ENCODE measurements at regions of chr14 and their contacts with region 1.

Region 1: DNA sequence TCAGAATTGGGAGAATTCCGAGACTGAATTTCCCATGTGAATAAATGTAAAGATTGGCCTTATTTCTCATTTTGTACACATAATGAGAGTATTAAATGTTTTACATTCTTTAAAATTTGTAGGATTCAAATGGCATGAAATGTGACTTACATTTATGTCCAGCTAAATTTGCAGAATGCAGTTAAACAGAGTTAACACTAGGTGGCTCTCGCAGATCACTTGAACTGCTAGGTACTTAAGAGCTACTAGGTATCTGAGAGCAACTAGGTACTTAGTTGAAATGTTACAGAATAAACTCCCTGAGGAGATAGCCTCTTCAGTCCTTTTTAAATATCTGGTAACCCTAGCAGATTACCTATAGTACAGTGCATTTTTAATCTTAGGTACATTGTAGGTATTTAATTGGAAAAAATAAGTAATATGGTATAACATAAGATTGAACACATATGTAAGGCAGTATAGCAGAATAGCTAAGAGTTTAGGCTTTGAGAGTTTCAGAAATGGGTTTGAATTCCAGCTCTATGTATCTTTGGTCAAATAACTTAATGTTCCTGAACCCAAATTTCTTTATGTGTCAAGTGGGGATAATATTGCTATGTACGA is 73.8 kb downstream of the KIAA0586 start:
- DNase-seq: peak in 5 of 14 experiments; percentile 21 to 70 (median 46)
- ATAC-seq: peak; percentile 71
- H3K4me3 ChIP-seq: no peak overlapping the region
- H3K4me3 Mint-ChIP-seq: no peak overlapping the region
- H3K27ac ChIP-seq: no peak overlapping the region
- H3K27ac Mint-ChIP-seq: no peak overlapping the region
- H3K4me1 ChIP-seq: no peaks in the 10 kb centered on the region
- H3K4me1 Mint-ChIP-seq: no peaks in the 10 kb centered on the region
- H3K27me3 ChIP-seq: no peaks in the 10 kb centered on the region
- H3K27me3 Mint-ChIP-seq: no peaks in the 10 kb centered on the region
- CTCF ChIP-seq: peak; percentile 82

Region 2: GRCh38 chr14:59055439-59056045 is 554.2 kb after region 1 on chr14:
- CTCF ChIA-PET with region 1: interaction called, 19 read pairs
- POLR2A ChIA-PET with region 1: interaction called, 4 read pairs
- intact Hi-C with region 1: loop called (anchors 1 kb)
- DNase-seq: peak in 8 of 14 experiments; percentile 3 to 52 (median 27)
- ATAC-seq: peak; percentile 44
- H3K4me3 ChIP-seq: no peak overlapping the region
- H3K4me3 Mint-ChIP-seq: no peak overlapping the region
- H3K27ac ChIP-seq: no peak overlapping the region
- H3K27ac Mint-ChIP-seq: no peak overlapping the region
- H3K4me1 ChIP-seq: no peaks in the 10 kb centered on the region
- H3K4me1 Mint-ChIP-seq: no peaks in the 10 kb centered on the region
- H3K27me3 ChIP-seq: no peaks in the 10 kb centered on the region
- H3K27me3 Mint-ChIP-seq: peaks cover 21% of the 10 kb centered on the region
- CTCF ChIP-seq: peak; percentile 63

Region 3: DNA sequence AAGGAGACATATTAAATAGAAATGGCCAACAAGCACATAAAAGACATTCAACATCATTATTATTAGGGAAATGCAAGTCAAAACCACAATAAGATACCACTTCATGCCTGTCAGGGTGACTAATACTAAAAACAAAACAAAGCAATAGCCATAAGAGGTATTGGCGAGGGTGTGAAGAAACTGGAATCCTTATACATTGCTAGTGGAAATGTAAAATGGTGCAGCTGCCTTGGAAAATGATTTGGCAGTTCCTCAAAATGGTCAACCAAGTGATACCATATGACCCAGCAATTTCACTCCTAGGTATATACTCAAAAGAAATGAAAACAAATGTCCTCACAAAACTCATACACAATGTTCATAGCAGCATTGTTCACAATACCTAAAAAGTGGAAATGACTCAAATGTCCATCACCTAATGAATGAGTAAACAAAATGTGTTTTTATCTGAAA is 936.9 kb after region 1 on chr14:
- CTCF ChIA-PET with region 1: no interaction called
- POLR2A ChIA-PET with region 1: no interaction called
- intact Hi-C with region 1: loop called (anchors 2 to 5 kb)
- DNase-seq: no peak
- ATAC-seq: no peak
- H3K4me3 ChIP-seq: no peak overlapping the region
- H3K4me3 Mint-ChIP-seq: no peak overlapping the region
- H3K27ac ChIP-seq: no peak overlapping the region
- H3K27ac Mint-ChIP-seq: no peak overlapping the region
- H3K4me1 ChIP-seq: no peaks in the 10 kb centered on the region
- H3K4me1 Mint-ChIP-seq: no peaks in the 10 kb centered on the region
- H3K27me3 ChIP-seq: no peaks in the 10 kb centered on the region
- H3K27me3 Mint-ChIP-seq: no peaks in the 10 kb centered on the region
- CTCF ChIP-seq: no peak